A549 (cell line): ENCODE measurements at regions of chr10 and their contacts with region 1.

Region 1: DNA sequence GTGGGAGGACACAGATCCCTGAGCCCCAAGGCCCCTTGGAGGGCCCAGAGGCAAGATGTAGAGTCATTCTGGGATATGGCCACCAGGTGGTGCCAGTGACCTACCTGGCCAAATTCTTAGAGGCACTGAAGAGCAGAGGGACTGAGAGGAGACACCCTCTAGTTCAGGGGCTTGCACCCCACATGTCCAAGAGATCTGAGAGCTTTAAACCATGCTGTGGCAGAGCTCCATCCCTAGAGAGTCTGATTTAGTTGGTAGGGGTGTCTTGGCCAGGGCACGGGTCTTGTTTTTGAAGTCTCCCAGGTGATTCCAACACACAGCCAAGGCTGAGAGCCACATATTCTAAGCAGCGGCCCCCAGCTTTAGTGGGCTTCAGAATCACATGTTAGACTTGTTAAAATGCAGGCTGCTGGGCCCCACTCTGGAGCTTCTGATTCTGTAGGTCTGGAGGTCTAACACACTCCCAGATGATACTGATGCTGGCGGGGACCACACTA is 52.5 kb downstream of the PRF1 start:
- DNase-seq: peak; percentile 60 to 78
- ATAC-seq: peak; percentile 84 to 95
- H3K4me3 ChIP-seq: no peak overlapping the region
- H3K27ac ChIP-seq: no peak overlapping the region
- H3K4me1 ChIP-seq: no peaks in the 10 kb centered on the region
- CTCF ChIP-seq: peak; percentile 87
- EP300 ChIP-seq: no peak
- POLR2A ChIP-seq: no peak
- RAD21 ChIP-seq: peak; percentile 89

Region 2: GRCh38 chr10:70466951-70467350 is 83.1 kb before region 1 on chr10:
- CTCF ChIA-PET with region 1: interaction called, 376 read pairs
- POLR2A ChIA-PET with region 1: no interaction called
- DNase-seq: no peak
- ATAC-seq: no peak
- H3K4me3 ChIP-seq: no peak overlapping the region
- H3K27ac ChIP-seq: no peak overlapping the region
- H3K4me1 ChIP-seq: peaks cover 5% of the 10 kb centered on the region
- CTCF ChIP-seq: no peak
- EP300 ChIP-seq: no peak
- POLR2A ChIP-seq: no peak
- RAD21 ChIP-seq: no peak

Region 3: GRCh38 chr10:70528726-70529362 is 21.2 kb before region 1 on chr10:
- CTCF ChIA-PET with region 1: interaction called, 29 read pairs
- POLR2A ChIA-PET with region 1: no interaction called
- DNase-seq: peak; percentile 66 to 67
- ATAC-seq: peak; percentile 75 to 95; a peak in 5 of 6 replicates
- H3K4me3 ChIP-seq: no peak overlapping the region
- H3K27ac ChIP-seq: no peak overlapping the region
- H3K4me1 ChIP-seq: no peaks in the 10 kb centered on the region
- CTCF ChIP-seq: no peak
- EP300 ChIP-seq: no peak
- POLR2A ChIP-seq: no peak
- RAD21 ChIP-seq: no peak

Region 4: DNA sequence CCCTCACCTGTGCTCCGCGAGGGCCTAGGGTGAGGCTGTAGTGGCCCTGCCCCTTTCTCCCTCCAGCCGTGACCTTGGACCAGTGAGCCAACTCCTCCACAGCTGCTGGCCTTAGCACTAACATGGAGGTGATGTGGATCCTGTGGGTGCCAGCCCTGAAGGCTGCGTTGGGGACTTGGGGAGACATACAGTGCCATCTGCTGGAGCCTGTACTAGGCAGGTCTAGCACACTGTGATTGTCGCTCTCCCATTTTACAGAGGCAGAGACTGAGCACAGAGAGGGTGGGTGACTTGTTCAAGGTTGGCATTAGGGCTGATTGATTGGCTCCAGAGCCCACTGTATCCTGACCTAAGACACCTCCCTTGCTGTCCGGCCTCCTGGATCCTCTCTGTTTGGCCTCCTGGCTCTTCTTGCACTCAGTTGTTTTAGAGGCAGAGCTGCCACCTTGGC is 14.9 kb after region 1 on chr10:
- CTCF ChIA-PET with region 1: interaction called, 63 read pairs
- POLR2A ChIA-PET with region 1: no interaction called
- DNase-seq: no peak
- ATAC-seq: peak; percentile 31 to 51; a peak in 3 of 6 replicates
- H3K4me3 ChIP-seq: no peak overlapping the region
- H3K27ac ChIP-seq: no peak overlapping the region
- H3K4me1 ChIP-seq: no peaks in the 10 kb centered on the region
- CTCF ChIP-seq: no peak
- EP300 ChIP-seq: no peak
- POLR2A ChIP-seq: no peak
- RAD21 ChIP-seq: 0 out of 5 replicates have a peak, but pooled peaks of 1 of the 2 experiments have one; percentile 21

Region 5: GRCh38 chr10:70880077-70880534 is 330.1 kb after region 1 on chr10:
- CTCF ChIA-PET with region 1: interaction called, 44 read pairs
- POLR2A ChIA-PET with region 1: no interaction called
- DNase-seq: peak; percentile 72 to 80
- ATAC-seq: peak; percentile 86 to 95
- H3K4me3 ChIP-seq: no peak overlapping the region
- H3K27ac ChIP-seq: no peak overlapping the region
- H3K4me1 ChIP-seq: no peaks in the 10 kb centered on the region
- CTCF ChIP-seq: peak; percentile 92
- EP300 ChIP-seq: no peak
- POLR2A ChIP-seq: no peak
- RAD21 ChIP-seq: peak; percentile 83 to 85